ENCODE measurements at regions of chr3 and their contacts with region 1.

Region 1: GRCh38 chr3:152385761-152386160 is 117.0 kb downstream of the MBNL1 start:
- DNase-seq: no peak
- ATAC-seq: no peak
- H3K4me3 ChIP-seq: no peak overlapping the region
- H3K27ac ChIP-seq: peak overlapping the region; percentile 13; the same call in 1 of the 2 replicates
- H3K4me1 ChIP-seq: peaks cover 6% of the 10 kb centered on the region; the same call in 1 of the 2 replicates
- H3K27me3 ChIP-seq: no peaks in the 10 kb centered on the region
- CTCF ChIP-seq: no peak
- EP300 ChIP-seq: no peak
- POLR2A ChIP-seq: no peak
- RAD21 ChIP-seq: no peak

Region 2: GRCh38 chr3:152193673-152194267 is 192.0 kb before region 1 on chr3:
- CTCF ChIA-PET with region 1: no interaction called
- POLR2A ChIA-PET with region 1: no interaction called
- RAD21 ChIA-PET with region 1: interaction called, 6 read pairs
- SMC1A ChIA-PET with region 1: no interaction called
- in situ Hi-C with region 1: no loop called
- intact Hi-C with region 1: loop called (anchors 5 kb)
- DNase-seq: no peak
- ATAC-seq: peak; percentile 67
- H3K4me3 ChIP-seq: peak overlapping the region; percentile 44; the same call in 1 of the 2 replicates
- H3K27ac ChIP-seq: peak overlapping the region; percentile 48; the same call in 1 of the 2 replicates
- H3K4me1 ChIP-seq: peaks cover 29% of the 10 kb centered on the region
- H3K27me3 ChIP-seq: no peaks in the 10 kb centered on the region
- CTCF ChIP-seq: no peak
- EP300 ChIP-seq: no peak
- POLR2A ChIP-seq: no peak
- RAD21 ChIP-seq: no peak; the same call in 1 of the 2 replicates

Region 3: DNA sequence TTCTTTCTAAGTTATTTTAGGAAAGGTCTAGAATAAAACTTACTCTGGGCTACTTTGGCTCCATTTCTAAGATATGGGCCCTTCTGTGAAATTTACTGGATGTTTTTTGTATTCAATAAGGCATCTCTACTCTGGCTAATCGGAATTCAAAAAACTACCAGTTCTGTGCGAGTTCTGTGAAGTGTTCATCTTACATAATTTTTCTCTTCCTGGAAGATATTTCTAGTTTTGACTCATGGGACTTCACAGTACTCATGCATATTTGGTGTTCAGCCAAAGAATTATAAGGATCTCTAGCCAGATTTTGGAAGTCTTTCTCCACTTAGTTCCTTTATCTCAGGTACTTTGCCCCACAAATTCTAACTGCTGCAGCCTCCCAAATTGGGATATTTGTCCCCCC is 163.4 kb before region 1 on chr3:
- CTCF ChIA-PET with region 1: no interaction called
- POLR2A ChIA-PET with region 1: no interaction called
- RAD21 ChIA-PET with region 1: no interaction called
- SMC1A ChIA-PET with region 1: no interaction called
- in situ Hi-C with region 1: no loop called
- intact Hi-C with region 1: no loop called
- DNase-seq: no peak
- ATAC-seq: peak; percentile 38; the same call in 2 of the 3 replicates
- H3K4me3 ChIP-seq: no peak overlapping the region
- H3K27ac ChIP-seq: no peak overlapping the region
- H3K4me1 ChIP-seq: no peaks in the 10 kb centered on the region
- H3K27me3 ChIP-seq: no peaks in the 10 kb centered on the region
- CTCF ChIP-seq: no peak
- EP300 ChIP-seq: no peak
- POLR2A ChIP-seq: no peak
- RAD21 ChIP-seq: no peak

Region 4: GRCh38 chr3:152399374-152399773 is 13.6 kb after region 1 on chr3:
- CTCF ChIA-PET with region 1: interaction called, 17 read pairs
- POLR2A ChIA-PET with region 1: interaction called, 5 read pairs
- RAD21 ChIA-PET with region 1: interaction called, 12 read pairs
- SMC1A ChIA-PET with region 1: interaction called, 25 read pairs
- in situ Hi-C with region 1: no loop called
- intact Hi-C with region 1: no loop called
- DNase-seq: no peak
- ATAC-seq: 0 out of 3 replicates have a peak, but pooled peaks have one; percentile 8
- H3K4me3 ChIP-seq: no peak overlapping the region
- H3K27ac ChIP-seq: no peak overlapping the region
- H3K4me1 ChIP-seq: no peaks in the 10 kb centered on the region; the same call in 1 of the 2 replicates
- H3K27me3 ChIP-seq: no peaks in the 10 kb centered on the region
- CTCF ChIP-seq: no peak
- EP300 ChIP-seq: no peak
- POLR2A ChIP-seq: no peak
- RAD21 ChIP-seq: no peak

Region 5: DNA sequence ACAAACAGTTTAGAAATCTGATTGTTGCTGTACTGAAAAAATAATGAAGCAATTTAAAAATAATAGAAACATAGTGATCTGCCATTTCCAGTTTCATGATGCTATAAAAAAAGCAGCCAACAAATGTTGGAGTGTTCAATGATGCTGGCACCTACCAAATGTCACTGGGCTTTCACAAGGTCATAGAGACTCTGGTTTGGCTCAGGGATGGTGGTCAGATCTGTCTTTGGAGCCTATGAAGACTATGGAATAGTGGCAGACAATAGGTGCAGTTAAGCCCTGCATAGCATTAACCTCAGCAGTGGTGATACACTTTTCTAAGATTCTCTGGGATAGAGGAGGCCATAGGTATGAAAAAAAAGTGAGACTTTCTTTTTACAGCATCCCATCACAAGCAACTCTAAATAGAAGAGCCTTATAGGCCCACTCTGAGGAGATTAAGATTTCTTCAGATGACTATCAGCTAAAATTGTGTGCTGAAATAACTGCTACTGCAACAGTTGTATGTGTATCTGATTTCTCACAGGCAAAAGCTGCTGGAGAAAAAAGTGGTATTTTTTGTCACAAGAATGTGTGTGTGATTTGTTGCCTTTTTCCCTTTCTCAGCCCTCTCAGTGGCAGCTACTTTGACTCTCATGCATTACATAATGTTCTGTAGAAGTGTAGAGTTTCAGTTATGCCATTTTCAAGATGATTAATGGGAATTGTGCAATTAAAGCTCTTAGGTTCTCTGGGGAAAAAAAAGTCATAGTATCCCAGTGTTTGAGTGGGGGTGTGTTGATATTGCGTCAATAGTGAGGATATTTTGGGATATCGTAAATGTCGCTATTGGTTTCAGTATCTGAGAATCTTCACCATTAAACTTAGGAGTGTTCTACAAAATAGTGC is 20.4 kb after region 1 on chr3:
- CTCF ChIA-PET with region 1: interaction called, 17 read pairs
- POLR2A ChIA-PET with region 1: interaction called, 5 read pairs
- RAD21 ChIA-PET with region 1: interaction called, 12 read pairs
- SMC1A ChIA-PET with region 1: interaction called, 25 read pairs
- in situ Hi-C with region 1: no loop called
- intact Hi-C with region 1: no loop called
- DNase-seq: no peak
- ATAC-seq: peak; percentile 22; the same call in 2 of the 3 replicates
- H3K4me3 ChIP-seq: no peak overlapping the region
- H3K27ac ChIP-seq: no peak overlapping the region
- H3K4me1 ChIP-seq: no peaks in the 10 kb centered on the region; the same call in 1 of the 2 replicates
- H3K27me3 ChIP-seq: no peaks in the 10 kb centered on the region
- CTCF ChIP-seq: no peak
- EP300 ChIP-seq: no peak
- POLR2A ChIP-seq: no peak
- RAD21 ChIP-seq: no peak

Region 6: DNA sequence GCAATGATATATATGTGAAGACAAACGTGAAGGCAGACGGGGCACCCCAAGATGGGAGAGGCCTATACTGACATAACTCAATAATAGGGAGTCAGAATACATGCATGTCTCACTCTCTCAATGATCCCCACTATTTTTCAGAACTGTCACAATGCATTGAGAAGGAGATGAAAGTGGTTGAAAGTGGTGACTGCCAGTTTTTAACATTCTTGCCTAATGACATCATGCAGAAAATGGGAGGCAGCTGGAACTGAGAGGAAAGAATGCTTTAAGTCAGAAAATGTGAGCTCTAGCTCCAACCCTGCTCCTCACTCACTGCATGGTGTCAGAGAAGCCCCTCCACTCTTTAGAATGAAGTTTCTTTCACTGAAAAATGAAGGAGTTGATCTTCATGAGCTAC is 393.9 kb after region 1 on chr3:
- CTCF ChIA-PET with region 1: no interaction called
- POLR2A ChIA-PET with region 1: no interaction called
- RAD21 ChIA-PET with region 1: no interaction called
- SMC1A ChIA-PET with region 1: no interaction called
- in situ Hi-C with region 1: no loop called
- intact Hi-C with region 1: no loop called
- DNase-seq: no peak
- ATAC-seq: peak; percentile 54
- H3K4me3 ChIP-seq: no peak overlapping the region
- H3K27ac ChIP-seq: no peak overlapping the region
- H3K4me1 ChIP-seq: peaks cover under 1% of the 10 kb centered on the region; the same call in 1 of the 2 replicates
- H3K27me3 ChIP-seq: no peaks in the 10 kb centered on the region
- CTCF ChIP-seq: no peak
- EP300 ChIP-seq: no peak
- POLR2A ChIP-seq: no peak
- RAD21 ChIP-seq: no peak